ENCODE measurements at regions of chr6 and their contacts with region 1.

Region 1: DNA sequence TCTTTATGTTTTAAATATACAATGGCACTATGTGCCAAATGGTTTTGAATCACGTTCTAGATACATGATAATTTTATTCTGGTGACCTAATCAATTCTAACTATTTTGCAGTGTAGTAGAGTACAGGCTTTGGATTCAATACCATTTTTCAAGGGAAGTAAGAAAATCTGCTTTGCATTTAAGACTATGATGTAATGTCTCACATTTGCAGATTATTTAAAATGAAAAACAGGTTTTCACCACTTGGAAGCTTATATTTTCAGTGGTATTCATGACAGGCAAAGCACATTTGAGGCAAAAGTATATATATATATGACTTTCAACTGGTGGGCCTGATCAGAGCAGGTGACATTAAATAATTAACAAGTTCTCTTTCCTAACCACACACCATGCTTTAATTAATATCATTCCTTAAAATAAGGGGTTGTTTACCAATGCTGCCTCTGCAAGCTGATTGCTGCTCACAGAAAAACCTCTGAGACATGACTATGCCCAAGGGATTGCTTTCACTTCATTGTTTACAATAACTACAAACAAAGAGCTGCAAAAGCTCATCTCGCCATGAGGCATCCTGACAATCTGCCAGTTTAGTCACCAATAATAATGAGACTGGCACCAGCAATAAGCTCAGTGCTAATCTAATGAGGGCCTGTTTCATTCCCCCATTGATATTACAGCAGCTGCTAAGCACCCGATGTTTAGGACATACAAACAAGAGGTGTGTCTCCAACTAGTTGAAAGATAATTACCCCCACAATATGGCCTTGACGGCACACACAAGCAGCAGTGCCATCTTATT is 1176.0 kb upstream of the GJE1 start:
- DNase-seq: no peak
- ATAC-seq: no peak
- H3K4me3 ChIP-seq: no peak overlapping the region
- H3K4me3 Mint-ChIP-seq: no peak overlapping the region
- H3K27ac ChIP-seq: no peak overlapping the region
- H3K27ac Mint-ChIP-seq: no peak overlapping the region
- H3K4me1 ChIP-seq: no peaks in the 10 kb centered on the region
- H3K4me1 Mint-ChIP-seq: no peaks in the 10 kb centered on the region
- H3K27me3 ChIP-seq: no peaks in the 10 kb centered on the region
- H3K27me3 Mint-ChIP-seq: no peaks in the 10 kb centered on the region

Region 2: DNA sequence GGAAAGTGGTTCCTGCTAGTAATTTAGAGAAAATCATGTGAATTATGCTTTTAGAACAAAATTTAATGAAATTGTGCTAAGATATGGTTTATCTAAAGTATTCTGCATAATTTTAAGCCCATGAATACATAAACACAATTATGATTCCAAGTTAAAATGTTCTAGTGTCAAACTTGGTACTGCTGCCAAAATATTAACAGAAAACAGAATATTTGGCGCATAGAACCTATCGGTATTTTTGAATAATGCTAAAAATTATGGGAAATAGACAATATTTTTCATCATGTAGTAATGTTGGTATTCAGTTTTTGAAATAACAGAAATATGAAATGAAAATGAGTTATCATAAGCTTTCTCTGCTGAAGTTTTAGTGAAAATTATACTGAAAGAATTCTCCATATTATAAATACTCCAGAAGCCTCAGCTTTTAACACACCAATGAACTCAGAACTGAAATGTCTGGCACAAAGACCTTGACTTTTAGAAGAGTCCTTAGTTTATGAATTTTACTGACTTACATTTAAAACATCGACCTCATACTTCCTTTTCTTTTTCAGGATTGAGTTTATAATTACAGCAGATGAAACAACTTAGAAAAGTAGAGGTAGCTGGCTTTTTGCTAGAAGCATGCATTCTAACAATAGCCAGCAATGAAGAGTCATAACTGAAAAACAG is 16.4 kb before region 1 on chr6:
- CTCF ChIA-PET with region 1: interaction called, 3 read pairs
- POLR2A ChIA-PET with region 1: no interaction called
- intact Hi-C with region 1: loop called in 1 of 2 experiments (anchors 2 kb)
- DNase-seq: no peak
- ATAC-seq: no peak
- H3K4me3 ChIP-seq: no peak overlapping the region
- H3K4me3 Mint-ChIP-seq: no peak overlapping the region
- H3K27ac ChIP-seq: no peak overlapping the region
- H3K27ac Mint-ChIP-seq: no peak overlapping the region
- H3K4me1 ChIP-seq: no peaks in the 10 kb centered on the region
- H3K4me1 Mint-ChIP-seq: no peaks in the 10 kb centered on the region
- H3K27me3 ChIP-seq: peaks cover 0 to 4% of the 10 kb centered on the region in 2 donors
- H3K27me3 Mint-ChIP-seq: peaks cover 0 to 3% (median 0%) of the 10 kb centered on the region in 5 donors

Region 3: DNA sequence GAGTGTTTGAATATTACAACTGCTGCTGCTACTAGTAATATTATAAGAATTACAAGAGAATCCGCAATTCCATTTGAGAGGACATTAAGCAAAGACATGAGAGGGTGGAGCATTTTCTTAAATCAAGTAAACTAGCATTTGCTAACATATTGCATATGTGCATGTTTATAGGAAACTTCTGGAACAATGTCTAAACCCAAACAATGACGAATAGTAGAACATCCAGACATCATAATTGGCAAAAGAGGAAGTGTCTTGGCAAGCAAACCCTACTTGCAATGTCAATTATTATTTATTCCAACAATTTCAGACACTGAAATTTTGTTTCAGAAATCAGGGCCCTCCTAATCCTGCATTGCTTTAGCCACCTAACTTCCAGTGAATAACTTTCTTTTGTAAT is 20.6 kb after region 1 on chr6:
- CTCF ChIA-PET with region 1: no interaction called
- POLR2A ChIA-PET with region 1: no interaction called
- intact Hi-C with region 1: no loop called
- DNase-seq: no peak
- ATAC-seq: no peak
- H3K4me3 ChIP-seq: no peak overlapping the region
- H3K4me3 Mint-ChIP-seq: no peak overlapping the region
- H3K27ac ChIP-seq: no peak overlapping the region
- H3K27ac Mint-ChIP-seq: no peak overlapping the region
- H3K4me1 ChIP-seq: no peaks in the 10 kb centered on the region
- H3K4me1 Mint-ChIP-seq: no peaks in the 10 kb centered on the region
- H3K27me3 ChIP-seq: no peaks in the 10 kb centered on the region
- H3K27me3 Mint-ChIP-seq: peaks cover 0 to 10% (median 0%) of the 10 kb centered on the region in 5 donors